ENCODE measurements at regions of chr13 and their contacts with region 1.

Region 1: GRCh38 chr13:79988573-79988972 is 352.4 kb downstream of the SPRY2 start:
- DNase-seq: no peak
- ATAC-seq: no peak

Region 2: GRCh38 chr13:79908381-79908780 is 80.2 kb before region 1 on chr13:
- intact Hi-C with region 1: loop called (anchors 2 kb)
- DNase-seq: no peak
- ATAC-seq: no peak

Region 3: DNA sequence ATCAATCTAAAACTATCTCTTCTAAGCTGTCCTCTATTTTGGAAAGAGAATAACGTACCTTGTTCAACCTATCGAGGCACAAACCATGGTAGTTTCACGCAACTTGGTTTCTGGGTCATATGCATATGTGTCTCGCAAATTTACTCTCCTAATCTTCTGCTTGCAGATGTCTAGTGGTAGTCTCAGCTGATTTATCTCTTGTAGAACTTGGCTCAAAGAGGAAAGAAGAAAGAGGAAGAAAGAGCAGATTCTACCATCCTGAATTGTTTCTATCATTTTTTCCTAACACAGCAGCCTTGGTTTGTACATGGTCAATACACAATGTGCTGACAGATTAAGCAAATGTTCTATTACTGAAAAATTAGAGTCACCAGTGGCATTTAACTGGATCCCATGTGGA is 70.1 kb after region 1 on chr13:
- intact Hi-C with region 1: no loop called
- DNase-seq: no peak
- ATAC-seq: no peak

Measured in sciatic nerve (tissue), 2 donors.